ENCODE measurements at regions of chr2 and their contacts with region 1.

Region 1: DNA sequence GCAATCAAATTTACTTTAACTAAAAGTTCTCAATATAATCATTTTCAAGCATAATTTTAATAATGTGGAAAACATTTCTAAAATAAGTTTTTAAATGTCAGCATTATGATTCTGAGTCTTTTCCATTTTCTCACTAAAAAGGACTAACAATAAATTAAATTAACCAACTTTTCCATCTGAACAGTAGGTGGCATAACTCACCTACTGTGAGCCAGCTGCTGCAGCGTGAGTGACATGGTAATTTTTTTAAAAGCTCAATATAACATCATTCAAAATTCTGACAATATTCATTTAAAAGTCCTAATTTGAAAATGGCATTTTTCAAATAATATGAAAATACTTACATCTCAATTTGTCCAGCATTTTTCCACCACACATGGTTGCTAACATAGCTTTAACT is 66.5 kb downstream of the DTNB start:
- DNase-seq: no peak
- H3K4me3 ChIP-seq: no peak overlapping the region
- H3K27ac ChIP-seq: no peak overlapping the region
- H3K27me3 ChIP-seq: no peaks in the 10 kb centered on the region
- CTCF ChIP-seq: peak; percentile 55

Region 2: GRCh38 chr2:25431604-25432003 is 175.3 kb before region 1 on chr2:
- CTCF ChIA-PET with region 1: no interaction called
- POLR2A ChIA-PET with region 1: no interaction called
- DNase-seq: no peak
- H3K4me3 ChIP-seq: no peak overlapping the region
- H3K27ac ChIP-seq: no peak overlapping the region
- H3K27me3 ChIP-seq: no peaks in the 10 kb centered on the region
- CTCF ChIP-seq: no peak

Region 3: GRCh38 chr2:25618642-25619037 is 11.7 kb after region 1 on chr2:
- CTCF ChIA-PET with region 1: interaction called, 26 read pairs
- POLR2A ChIA-PET with region 1: interaction called, 3 read pairs
- DNase-seq: no peak
- H3K4me3 ChIP-seq: no peak overlapping the region
- H3K27ac ChIP-seq: no peak overlapping the region
- H3K27me3 ChIP-seq: no peaks in the 10 kb centered on the region
- CTCF ChIP-seq: no peak

Region 4: GRCh38 chr2:25651071-25651470 is 44.2 kb after region 1 on chr2:
- CTCF ChIA-PET with region 1: interaction called, 22 read pairs
- POLR2A ChIA-PET with region 1: no interaction called
- DNase-seq: no peak
- H3K4me3 ChIP-seq: no peak overlapping the region
- H3K27ac ChIP-seq: no peak overlapping the region
- H3K27me3 ChIP-seq: no peaks in the 10 kb centered on the region
- CTCF ChIP-seq: no peak

Region 5: GRCh38 chr2:25700221-25700660 is 93.3 kb after region 1 on chr2:
- CTCF ChIA-PET with region 1: interaction called, 62 read pairs
- POLR2A ChIA-PET with region 1: no interaction called
- DNase-seq: no peak
- H3K4me3 ChIP-seq: no peak overlapping the region
- H3K27ac ChIP-seq: no peak overlapping the region
- H3K27me3 ChIP-seq: peaks cover 12% of the 10 kb centered on the region
- CTCF ChIP-seq: peak; percentile 82

Measured in AG04450 (cell line).